H1 (cell line): ENCODE measurements at regions of chr6 and their contacts with region 1.

Region 1: GRCh38 chr6:77620278-77620882 is 32.5 kb upstream of the MEI4 start:
- DNase-seq: no peak
- H3K4me3 ChIP-seq: no peak overlapping the region
- H3K27ac ChIP-seq: no peak overlapping the region
- H3K4me1 ChIP-seq: no peaks in the 10 kb centered on the region
- H3K27me3 ChIP-seq: no peaks in the 10 kb centered on the region
- CTCF ChIP-seq: peak in 2 of 3 experiments; percentile 49 to 71; a peak in 2 of 4 replicates
- EP300 ChIP-seq: no peak
- POLR2A ChIP-seq: no peak
- RAD21 ChIP-seq: peak; percentile 67 to 71

Region 2: DNA sequence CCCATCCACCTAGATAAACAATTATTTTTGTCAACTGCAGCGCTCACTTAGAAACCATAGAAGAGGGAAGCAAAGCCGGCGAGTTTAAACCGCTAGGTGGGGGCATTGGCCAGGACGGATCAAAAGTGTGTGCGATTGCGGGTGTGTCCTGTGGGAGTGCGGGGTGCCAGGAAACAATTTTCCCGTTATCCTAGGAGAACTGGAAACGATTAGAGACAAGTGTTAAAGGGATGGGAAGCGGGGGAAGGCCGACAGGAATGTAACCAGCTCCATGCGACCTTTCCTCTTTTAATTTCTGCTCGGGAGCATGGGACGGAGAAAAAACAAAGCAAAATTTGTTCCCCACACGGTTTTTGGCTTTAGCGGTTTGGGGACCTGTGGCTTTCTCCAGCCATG is 154.3 kb before region 1 on chr6:
- CTCF ChIA-PET with region 1: interaction called, 20 read pairs
- POLR2A ChIA-PET with region 1: no interaction called
- DNase-seq: peak in 1 of 2 experiments; percentile 72
- H3K4me3 ChIP-seq: peak overlapping the region; percentile 81 to 90 (median 86)
- H3K27ac ChIP-seq: no peak overlapping the region
- H3K4me1 ChIP-seq: peaks cover 0 to 5% (median under 1%) of the 10 kb centered on the region in 4 experiments; a peak in 5 of 7 replicates
- H3K27me3 ChIP-seq: peaks cover 4 to 53% (median 46%) of the 10 kb centered on the region in 4 experiments
- CTCF ChIP-seq: peak; percentile 65 to 79 (median 68)
- EP300 ChIP-seq: no peak
- POLR2A ChIP-seq: no peak
- RAD21 ChIP-seq: peak; percentile 75 to 84

Region 3: DNA sequence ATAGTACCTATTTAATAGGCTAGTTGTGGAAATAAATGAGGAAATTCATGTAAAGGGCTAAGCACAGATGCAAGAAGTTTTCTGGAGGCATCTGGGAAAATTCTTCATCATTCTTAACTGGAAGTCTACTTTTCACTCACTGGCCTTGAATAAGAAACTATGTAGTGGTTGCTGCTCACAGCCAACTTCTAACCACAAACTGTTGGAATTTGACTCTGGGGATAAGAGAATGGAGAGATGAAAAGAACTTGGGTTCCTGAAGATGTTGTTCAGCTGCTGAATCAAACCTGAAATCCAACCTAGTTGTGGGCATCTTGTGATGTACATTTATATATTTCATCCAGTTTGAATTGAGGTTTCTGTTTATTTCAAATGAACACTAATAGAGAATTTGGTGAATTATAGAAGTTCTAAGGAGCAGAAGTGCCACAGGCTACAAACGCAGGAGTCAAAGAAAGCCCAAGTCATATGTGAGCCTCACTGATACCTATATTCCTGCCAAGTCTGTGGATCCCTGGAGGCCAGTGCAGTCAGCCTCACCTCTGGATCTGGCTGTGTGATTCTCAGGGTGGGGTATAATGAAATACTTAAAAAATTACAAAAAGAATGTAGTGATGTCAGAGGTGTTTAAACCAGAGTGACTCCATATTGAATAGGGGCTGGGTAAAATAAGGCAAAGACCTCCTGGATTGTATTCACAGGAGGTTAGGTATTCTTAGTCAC is 13.8 kb after region 1 on chr6:
- CTCF ChIA-PET with region 1: interaction called, 27 read pairs
- POLR2A ChIA-PET with region 1: no interaction called
- DNase-seq: no peak
- H3K4me3 ChIP-seq: no peak overlapping the region
- H3K27ac ChIP-seq: no peak overlapping the region
- H3K4me1 ChIP-seq: no peaks in the 10 kb centered on the region
- H3K27me3 ChIP-seq: no peaks in the 10 kb centered on the region
- CTCF ChIP-seq: no peak
- EP300 ChIP-seq: no peak
- POLR2A ChIP-seq: no peak
- RAD21 ChIP-seq: no peak

Region 4: DNA sequence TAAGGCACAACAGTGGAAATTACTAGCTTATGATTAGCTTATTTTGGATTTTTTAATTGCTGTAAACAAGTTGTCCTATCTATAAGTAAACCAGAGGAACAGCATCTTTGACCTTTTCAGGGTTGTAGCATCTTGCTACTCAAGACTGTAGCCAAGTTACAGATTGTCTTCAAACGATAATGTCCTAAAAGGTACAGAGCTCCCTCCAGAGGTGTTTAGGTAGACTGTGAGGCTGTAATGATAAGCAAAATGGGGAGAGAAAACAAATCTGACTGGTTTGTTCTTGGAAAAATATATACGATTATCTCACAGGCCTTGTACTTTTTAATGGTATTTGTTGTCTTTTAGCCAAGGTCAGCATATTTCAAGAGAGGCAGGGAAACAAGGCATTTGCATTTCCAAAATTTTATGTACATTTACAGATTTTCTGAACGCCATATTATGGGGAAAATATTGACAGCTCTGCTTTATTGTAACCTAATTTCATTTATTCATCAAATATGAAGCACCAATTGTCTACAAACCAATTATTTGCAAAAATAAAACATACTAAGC is 305.9 kb after region 1 on chr6:
- CTCF ChIA-PET with region 1: interaction called, 27 read pairs
- POLR2A ChIA-PET with region 1: no interaction called
- DNase-seq: no peak
- H3K4me3 ChIP-seq: no peak overlapping the region
- H3K27ac ChIP-seq: no peak overlapping the region
- H3K4me1 ChIP-seq: no peaks in the 10 kb centered on the region
- H3K27me3 ChIP-seq: no peaks in the 10 kb centered on the region
- CTCF ChIP-seq: peak in 2 of 3 experiments; percentile 62 to 65; a peak in 3 of 4 replicates
- EP300 ChIP-seq: no peak
- POLR2A ChIP-seq: no peak
- RAD21 ChIP-seq: peak; percentile 86 to 88